Stomach (tissue), 19 donors: ENCODE measurements at regions of chr3 and their contacts with region 1.

Region 1: GRCh38 chr3:170414202-170414663 is 4.4 kb upstream of the CLDN11 start:
- DNase-seq: peak in 1 of 2 donors; percentile 88
- H3K4me3 ChIP-seq: no peak overlapping the region
- H3K27ac ChIP-seq: no peak overlapping the region
- H3K4me1 ChIP-seq: peaks cover 11 to 15% (median 12%) of the 10 kb centered on the region in 4 donors
- H3K27me3 ChIP-seq: peaks cover 0 to 31% (median 17%) of the 10 kb centered on the region in 3 donors
- CTCF ChIP-seq: peak in 5 of 7 experiments; percentile 75 to 90 (median 86)
- EP300 ChIP-seq: no peak
- POLR2A ChIP-seq: no peak

Region 2: GRCh38 chr3:170317954-170318353 is 96.3 kb before region 1 on chr3:
- intact Hi-C with region 1: loop called (anchors 10 kb)
- DNase-seq: no peak
- H3K4me3 ChIP-seq: no peak overlapping the region
- H3K27ac ChIP-seq: no peak overlapping the region
- H3K4me1 ChIP-seq: peaks cover 0 to 9% (median 0%) of the 10 kb centered on the region in 4 donors
- H3K27me3 ChIP-seq: no peaks in the 10 kb centered on the region
- CTCF ChIP-seq: no peak
- EP300 ChIP-seq: no peak
- POLR2A ChIP-seq: no peak

Region 3: GRCh38 chr3:170689893-170690660 is 275.8 kb after region 1 on chr3:
- intact Hi-C with region 1: loop called (anchors 10 kb)
- DNase-seq: peak; percentile 77 to 78
- H3K4me3 ChIP-seq: no peak overlapping the region
- H3K27ac ChIP-seq: no peak overlapping the region
- H3K4me1 ChIP-seq: peaks cover 0 to 8% (median 3%) of the 10 kb centered on the region in 4 donors
- H3K27me3 ChIP-seq: no peaks in the 10 kb centered on the region
- CTCF ChIP-seq: peak in 5 of 7 experiments; percentile 43 to 78 (median 71)
- EP300 ChIP-seq: no peak
- POLR2A ChIP-seq: no peak